ENCODE measurements at regions of chr3 and their contacts with region 1.

Region 1: GRCh38 chr3:160941885-160942494 is 163.2 kb downstream of the B3GALNT1 start:
- DNase-seq: peak; percentile 62
- CTCF ChIP-seq: peak; percentile 62

Region 2: DNA sequence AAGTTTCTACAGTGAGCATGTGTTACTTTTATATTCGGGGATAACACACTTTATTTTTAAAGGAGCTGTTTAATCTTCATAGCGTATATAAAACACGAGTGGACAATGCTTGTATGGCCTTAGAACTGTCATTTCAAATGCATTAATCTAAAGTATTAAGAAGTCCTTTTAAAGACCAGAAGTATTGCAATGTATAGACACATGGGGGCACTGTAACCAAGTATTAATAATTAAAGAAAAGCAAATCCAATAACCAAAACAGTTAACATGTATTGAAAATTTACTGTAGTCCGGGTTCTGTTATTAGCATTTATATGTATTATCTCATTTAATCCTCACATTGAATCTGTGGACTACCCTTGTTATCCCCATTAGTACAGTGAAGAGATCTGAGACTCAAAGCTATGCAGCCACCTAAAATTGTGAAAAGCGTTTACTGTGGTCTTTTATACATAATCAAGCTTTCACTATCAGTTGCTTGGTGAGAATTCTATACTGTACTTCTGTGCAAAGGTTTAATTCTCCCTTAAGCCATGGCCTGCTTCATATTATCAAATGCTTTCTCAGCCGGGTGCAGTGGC is 254.9 kb before region 1 on chr3:
- CTCF ChIA-PET with region 1: interaction called, 27 read pairs
- POLR2A ChIA-PET with region 1: no interaction called
- DNase-seq: peak; percentile 31
- CTCF ChIP-seq: peak; percentile 45

Region 3: GRCh38 chr3:160707187-160707794 is 234.7 kb before region 1 on chr3:
- CTCF ChIA-PET with region 1: interaction called, 22 read pairs
- POLR2A ChIA-PET with region 1: no interaction called
- DNase-seq: peak; percentile 21
- CTCF ChIP-seq: peak; percentile 46

Region 4: DNA sequence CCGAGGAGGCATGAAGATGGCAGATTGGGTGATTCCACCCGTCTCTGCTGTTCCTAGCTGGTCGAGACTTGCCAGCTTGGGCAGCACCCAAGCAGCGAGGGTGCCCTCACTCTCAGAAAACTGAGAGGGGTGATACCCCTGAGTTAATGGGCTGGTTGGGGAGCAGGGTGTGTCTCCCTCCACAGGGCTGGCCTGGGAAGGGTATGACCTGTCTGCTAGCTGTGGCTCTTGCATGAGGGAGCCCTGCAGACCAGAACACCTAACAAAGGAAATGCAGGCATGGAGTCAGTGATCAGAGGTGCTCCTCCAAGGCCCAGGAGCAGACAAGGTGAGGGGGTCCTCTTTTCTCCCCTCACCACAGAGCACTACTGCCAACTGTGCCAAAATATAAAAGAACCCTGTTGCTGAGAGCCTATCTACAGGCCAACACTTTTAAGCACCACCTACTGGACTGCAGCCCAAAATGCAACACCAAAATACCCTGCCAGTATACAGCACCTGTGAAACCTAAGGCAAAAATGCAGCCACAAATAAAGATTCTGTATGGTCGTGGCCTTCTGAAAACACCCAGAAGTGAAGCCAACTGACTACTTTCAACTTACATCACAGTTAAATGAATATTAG is 221.8 kb before region 1 on chr3:
- CTCF ChIA-PET with region 1: interaction called, 10 read pairs
- POLR2A ChIA-PET with region 1: no interaction called
- DNase-seq: peak; percentile 15
- CTCF ChIP-seq: no peak

Region 5: DNA sequence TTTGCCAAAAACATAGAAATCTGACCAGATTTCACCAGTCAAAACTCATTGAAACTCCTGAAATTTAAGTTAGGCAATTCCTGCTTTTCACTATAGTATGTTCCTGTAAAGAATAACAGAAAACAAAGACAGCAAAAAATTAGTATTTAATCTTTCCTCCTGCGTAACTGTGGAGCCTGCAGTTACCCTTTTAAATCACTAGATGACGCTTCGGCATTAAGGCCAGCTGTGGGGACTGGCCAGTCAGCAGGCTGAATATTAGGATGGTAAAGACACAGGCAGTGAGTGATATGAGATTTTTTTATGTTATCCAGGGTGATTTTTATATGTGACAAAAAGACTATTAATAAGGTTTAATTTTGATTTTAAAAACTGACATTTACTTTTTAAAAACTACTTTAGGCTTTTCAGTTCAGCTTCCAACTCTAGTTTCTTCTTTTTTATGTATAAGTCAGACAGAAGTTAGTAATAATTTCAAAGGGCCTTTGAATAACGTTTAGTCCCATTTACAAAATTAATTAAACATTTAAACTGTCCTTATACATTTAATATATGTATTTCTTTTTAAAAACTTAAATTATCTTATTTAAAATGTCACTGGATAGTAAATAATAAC is 20.9 kb before region 1 on chr3:
- CTCF ChIA-PET with region 1: interaction called, 23 read pairs
- POLR2A ChIA-PET with region 1: no interaction called
- DNase-seq: peak; percentile 39
- CTCF ChIP-seq: peak; percentile 66

Region 6: DNA sequence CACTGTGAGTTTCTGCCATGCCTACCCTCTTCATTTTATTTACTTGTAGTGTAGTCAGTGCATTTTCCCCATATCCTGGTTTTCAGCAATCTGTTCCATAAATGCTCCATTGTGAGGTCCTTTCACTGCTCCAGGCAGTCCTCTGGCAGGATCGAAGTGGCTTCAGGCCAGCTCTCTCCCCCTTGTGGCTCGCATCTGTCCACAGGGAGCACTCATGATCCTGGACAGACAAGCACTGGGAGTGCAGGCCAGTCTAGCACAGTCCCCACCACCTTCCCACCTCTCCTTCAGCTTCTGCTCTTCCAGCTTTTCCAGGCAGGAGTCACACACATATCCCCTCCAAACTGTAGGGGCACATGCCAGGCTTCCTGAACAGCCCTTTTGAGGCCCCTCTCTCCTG is 12.4 kb before region 1 on chr3:
- CTCF ChIA-PET with region 1: interaction called, 23 read pairs
- POLR2A ChIA-PET with region 1: no interaction called
- DNase-seq: no peak
- CTCF ChIP-seq: no peak

Region 7: GRCh38 chr3:160956806-160957205 is 14.8 kb after region 1 on chr3:
- CTCF ChIA-PET with region 1: interaction called, 18 read pairs
- POLR2A ChIA-PET with region 1: no interaction called
- DNase-seq: peak; percentile 29
- CTCF ChIP-seq: peak; percentile 55

Region 8: GRCh38 chr3:161197855-161198850 is 256.2 kb after region 1 on chr3:
- CTCF ChIA-PET with region 1: no interaction called
- POLR2A ChIA-PET with region 1: no interaction called
- DNase-seq: no peak
- CTCF ChIP-seq: no peak

Region 9: GRCh38 chr3:161253711-161254110 is 311.7 kb after region 1 on chr3:
- CTCF ChIA-PET with region 1: no interaction called
- POLR2A ChIA-PET with region 1: no interaction called
- DNase-seq: no peak
- CTCF ChIP-seq: no peak

Measured in GM10248 (cell line).